Caco-2 (cell line): ENCODE measurements at regions of chrX and their contacts with region 1.

Region 1: DNA sequence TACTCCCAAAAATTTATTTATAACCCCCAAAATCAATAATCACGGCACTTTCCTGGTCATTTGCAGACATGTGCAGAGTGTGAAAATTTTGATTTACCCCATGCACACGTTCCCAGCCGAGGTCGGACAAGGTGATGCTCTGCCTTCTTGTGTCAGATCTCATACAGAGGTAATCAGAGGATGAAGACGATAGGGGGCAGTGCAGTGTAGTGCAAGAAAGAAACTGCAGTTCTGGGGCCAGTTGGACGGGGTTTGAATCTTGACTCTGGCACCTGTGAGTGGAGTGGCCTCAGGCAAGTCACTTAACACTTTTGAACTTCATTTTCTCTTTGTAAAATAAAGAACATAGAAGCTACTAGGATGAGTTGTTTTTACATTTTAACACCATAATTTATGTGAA is 88.4 kb downstream of the FRMPD3 start:
- DNase-seq: peak in 1 of 2 experiments; percentile 30
- H3K4me3 ChIP-seq: no peak overlapping the region
- H3K4me3 Mint-ChIP-seq: no peak overlapping the region
- H3K27ac Mint-ChIP-seq: no peak overlapping the region
- H3K4me1 ChIP-seq: no peaks in the 10 kb centered on the region
- H3K4me1 Mint-ChIP-seq: peaks cover 3% of the 10 kb centered on the region
- H3K27me3 ChIP-seq: no peaks in the 10 kb centered on the region
- H3K27me3 Mint-ChIP-seq: peaks cover 9% of the 10 kb centered on the region
- CTCF ChIP-seq: no peak

Region 2: GRCh38 chrX:107025545-107025944 is 512.3 kb before region 1 on chrX:
- CTCF ChIA-PET with region 1: interaction called, 3 read pairs
- POLR2A ChIA-PET with region 1: no interaction called
- intact Hi-C with region 1: loop called (anchors 1 kb)
- DNase-seq: peak in 1 of 2 experiments; percentile 25
- H3K4me3 ChIP-seq: no peak overlapping the region
- H3K4me3 Mint-ChIP-seq: no peak overlapping the region
- H3K27ac Mint-ChIP-seq: no peak overlapping the region
- H3K4me1 ChIP-seq: no peaks in the 10 kb centered on the region
- H3K4me1 Mint-ChIP-seq: no peaks in the 10 kb centered on the region
- H3K27me3 ChIP-seq: no peaks in the 10 kb centered on the region
- H3K27me3 Mint-ChIP-seq: peaks cover 3% of the 10 kb centered on the region
- CTCF ChIP-seq: peak; percentile 50 to 55

Region 3: GRCh38 chrX:107628662-107629532 is 91.1 kb after region 1 on chrX:
- CTCF ChIA-PET with region 1: no interaction called
- POLR2A ChIA-PET with region 1: no interaction called
- intact Hi-C with region 1: loop called (anchors 1 kb)
- DNase-seq: peak; percentile 16 to 34
- H3K4me3 ChIP-seq: peak overlapping the region; percentile 59
- H3K4me3 Mint-ChIP-seq: peak overlapping the region; percentile 79
- H3K27ac Mint-ChIP-seq: peak overlapping the region; percentile 72
- H3K4me1 ChIP-seq: no peaks in the 10 kb centered on the region
- H3K4me1 Mint-ChIP-seq: peaks cover 8% of the 10 kb centered on the region
- H3K27me3 ChIP-seq: no peaks in the 10 kb centered on the region
- H3K27me3 Mint-ChIP-seq: peaks cover 3% of the 10 kb centered on the region
- CTCF ChIP-seq: no peak